ENCODE measurements at regions of chr3 and their contacts with region 1.

Region 1: GRCh38 chr3:11236595-11237461 is 35.4 kb upstream of the ATG7 start:
- DNase-seq: peak; percentile 39 to 91
- H3K4me3 ChIP-seq: no peak overlapping the region
- H3K27ac ChIP-seq: no peak overlapping the region
- H3K4me1 ChIP-seq: peaks cover 0 to 4% (median 0%) of the 10 kb centered on the region in 4 experiments; a peak in 2 of 7 replicates
- H3K27me3 ChIP-seq: no peaks in the 10 kb centered on the region
- CTCF ChIP-seq: peak; percentile 65 to 86 (median 73)
- EP300 ChIP-seq: 0 out of 3 replicates have a peak, but pooled peaks of 1 of the 2 experiments have one; percentile 21
- POLR2A ChIP-seq: no peak
- RAD21 ChIP-seq: peak; percentile 70 to 80

Region 2: GRCh38 chr3:11077466-11077865 is 159.4 kb before region 1 on chr3:
- CTCF ChIA-PET with region 1: no interaction called
- POLR2A ChIA-PET with region 1: no interaction called
- DNase-seq: no peak
- H3K4me3 ChIP-seq: no peak overlapping the region
- H3K27ac ChIP-seq: no peak overlapping the region
- H3K4me1 ChIP-seq: peaks cover 0 to 3% (median 0%) of the 10 kb centered on the region in 4 experiments; a peak in 1 of 7 replicates
- H3K27me3 ChIP-seq: no peaks in the 10 kb centered on the region
- CTCF ChIP-seq: no peak
- EP300 ChIP-seq: no peak
- POLR2A ChIP-seq: no peak
- RAD21 ChIP-seq: no peak

Region 3: GRCh38 chr3:11250902-11251813 is 14.3 kb after region 1 on chr3:
- CTCF ChIA-PET with region 1: interaction called, 17 read pairs
- POLR2A ChIA-PET with region 1: no interaction called
- DNase-seq: no peak
- H3K4me3 ChIP-seq: no peak overlapping the region
- H3K27ac ChIP-seq: no peak overlapping the region
- H3K4me1 ChIP-seq: no peaks in the 10 kb centered on the region
- H3K27me3 ChIP-seq: no peaks in the 10 kb centered on the region; a peak in 1 of 7 replicates
- CTCF ChIP-seq: no peak
- EP300 ChIP-seq: no peak
- POLR2A ChIP-seq: no peak
- RAD21 ChIP-seq: no peak

Measured in H1 (cell line).